Heart right ventricle (tissue), 16 donors: ENCODE measurements at regions of chr17 and their contacts with region 1.

Region 1: DNA sequence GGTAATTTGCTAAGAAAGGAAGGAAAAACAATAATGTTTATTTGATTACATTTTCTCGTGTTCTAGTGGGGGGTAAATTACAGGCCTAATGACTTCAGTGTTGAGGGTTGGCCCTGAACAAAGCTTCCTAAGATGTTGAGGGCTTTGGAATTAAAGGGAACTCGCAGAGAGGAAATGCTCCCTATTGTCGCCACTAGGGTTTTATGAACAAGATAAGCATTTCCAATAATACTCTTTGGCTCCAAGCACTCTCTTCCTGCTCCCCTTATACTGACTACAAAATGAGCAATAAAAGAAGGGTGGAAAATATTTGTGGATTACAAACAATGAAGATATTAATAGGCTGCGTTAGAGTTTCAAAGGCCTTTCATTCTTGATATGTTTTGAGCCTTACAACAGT is 363.6 kb downstream of the HS3ST3B1 start:
- DNase-seq: no peak
- ATAC-seq: no peak
- H3K4me3 ChIP-seq: no peak overlapping the region
- H3K27ac ChIP-seq: no peak overlapping the region
- H3K4me1 ChIP-seq: no peaks in the 10 kb centered on the region
- H3K27me3 ChIP-seq: no peaks in the 10 kb centered on the region
- CTCF ChIP-seq: no peak

Region 2: DNA sequence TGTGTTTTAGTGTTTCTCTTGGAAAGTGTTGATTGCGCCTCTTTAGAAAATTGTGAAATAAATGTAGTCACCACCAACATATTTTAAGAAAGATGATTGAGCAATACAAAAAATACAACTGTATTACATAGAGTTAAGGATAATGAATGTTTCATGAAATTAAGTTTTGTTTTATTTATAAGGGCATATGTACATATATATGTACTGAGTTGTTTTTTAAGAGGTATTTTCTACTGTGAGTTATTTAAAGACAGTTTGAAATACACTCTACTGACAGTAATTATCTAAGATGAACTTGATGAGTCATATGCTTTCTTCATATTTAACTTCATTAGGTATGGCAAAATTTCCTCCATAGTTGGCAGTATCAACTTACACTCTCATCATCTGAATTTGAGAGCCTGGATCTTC is 48.1 kb after region 1 on chr17:
- intact Hi-C with region 1: loop called in 1 of 10 experiments (anchors 10 kb)
- DNase-seq: no peak
- ATAC-seq: no peak
- H3K4me3 ChIP-seq: no peak overlapping the region
- H3K27ac ChIP-seq: no peak overlapping the region
- H3K4me1 ChIP-seq: peaks cover 0 to 10% (median 0%) of the 10 kb centered on the region in 9 donors
- H3K27me3 ChIP-seq: no peaks in the 10 kb centered on the region
- CTCF ChIP-seq: no peak